Activated CD8-positive, alpha-beta memory T cell treated with anti-CD3 and anti-CD28 coated beads, Interleukin-2, amount 10 ng/mL, durations not matched to agents 7 days and 5 days (primary cell): ENCODE measurements at regions of chr15 and their contacts with region 1.

Region 1: DNA sequence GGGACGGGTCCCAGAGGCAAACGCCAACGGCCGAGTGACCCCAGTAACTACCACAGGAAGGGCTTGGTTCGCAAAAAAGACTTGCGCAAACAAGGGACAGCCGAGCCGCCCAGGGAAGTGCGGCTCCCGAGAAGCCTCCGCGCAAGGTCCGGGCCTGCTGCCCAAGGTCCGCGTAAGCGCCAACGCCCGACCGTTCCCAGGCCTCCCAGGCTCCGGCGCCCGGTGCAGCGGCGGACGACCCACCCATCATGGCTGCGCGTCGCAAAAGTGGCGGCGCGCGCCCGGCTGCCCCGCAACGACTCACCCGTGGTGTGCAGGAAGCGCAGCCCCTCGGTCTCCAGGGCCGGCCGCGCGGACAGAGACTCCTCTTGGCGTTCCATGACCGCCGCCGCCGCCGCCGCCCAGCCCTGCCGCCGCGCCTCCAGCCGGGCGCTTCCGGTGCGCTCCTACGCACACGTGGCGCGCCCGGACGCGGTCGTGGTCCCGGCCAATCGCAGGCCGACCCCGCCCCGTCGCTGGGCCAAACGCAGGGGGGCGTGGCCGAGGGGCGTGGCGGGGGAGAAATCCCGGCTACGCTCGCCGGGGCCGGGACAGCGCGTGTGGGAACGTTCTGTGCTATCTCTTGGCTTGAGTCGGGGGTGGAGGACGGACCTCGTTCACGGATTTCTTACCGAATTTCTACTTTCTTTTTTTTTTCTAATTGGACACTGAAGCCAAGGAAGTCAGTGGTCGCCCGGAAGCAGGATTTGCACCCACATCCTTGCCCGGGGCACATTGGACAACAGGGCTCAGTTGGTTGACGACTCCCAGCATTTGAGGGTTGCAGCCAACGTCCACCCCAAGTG is at the start of gene SELENOS:
- DNase-seq: peak; percentile 88
- ATAC-seq: peak; percentile 93
- H3K4me3 Mint-ChIP-seq: peak within 1 kb of the TSS; percentile 100
- H3K27ac Mint-ChIP-seq: peak within 1 kb of the TSS; percentile 99
- H3K4me1 Mint-ChIP-seq: peaks cover 30% of the 10 kb centered on the region
- H3K27me3 Mint-ChIP-seq: no peaks in the 10 kb centered on the region
- total RNA-seq, gene SELENOS: 33.1 to 49.0 TPM

Region 2: DNA sequence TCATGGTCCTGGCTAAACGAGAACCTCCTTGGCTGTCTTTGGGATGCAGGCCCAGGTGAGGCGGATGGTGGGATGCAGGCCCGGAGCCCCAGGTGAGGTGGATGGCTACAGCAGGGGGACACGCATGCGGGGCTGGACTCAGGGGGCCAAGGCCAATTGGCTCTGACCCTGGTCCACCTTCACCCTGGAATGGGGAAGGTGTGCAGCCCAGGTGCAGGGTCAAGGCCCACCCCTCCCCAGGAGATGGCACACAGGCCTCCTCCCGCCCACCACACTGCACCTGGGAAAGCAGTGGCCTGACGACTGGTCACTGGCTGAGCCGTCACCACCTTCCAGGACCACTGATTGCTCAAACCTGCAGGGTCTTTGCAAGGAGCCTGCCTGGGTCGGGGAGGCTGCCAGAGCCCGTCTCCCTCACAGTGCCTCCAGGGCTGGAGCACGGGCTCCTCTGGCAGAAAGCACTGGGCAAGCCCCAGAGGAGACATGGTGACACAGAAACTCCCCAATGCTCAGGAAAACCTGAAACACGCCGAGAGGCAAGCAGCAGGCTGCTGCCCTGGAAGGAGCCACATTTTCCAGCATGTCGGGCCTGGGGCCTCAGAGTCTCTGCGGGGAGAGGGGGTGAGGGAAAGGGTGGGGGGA is 198.5 kb before region 1 on chr15:
- CTCF ChIA-PET with region 1: no interaction called
- DNase-seq: no peak
- ATAC-seq: no peak
- H3K4me3 Mint-ChIP-seq: no peak overlapping the region
- H3K27ac Mint-ChIP-seq: no peak overlapping the region
- H3K4me1 Mint-ChIP-seq: no peaks in the 10 kb centered on the region
- H3K27me3 Mint-ChIP-seq: peaks cover 5% of the 10 kb centered on the region

Region 3: GRCh38 chr15:101288908-101289513 is 11.8 kb after region 1 on chr15:
- CTCF ChIA-PET with region 1: interaction called, 41 read pairs
- DNase-seq: no peak
- ATAC-seq: peak; percentile 52
- H3K4me3 Mint-ChIP-seq: no peak overlapping the region
- H3K27ac Mint-ChIP-seq: peak overlapping the region; percentile 70
- H3K4me1 Mint-ChIP-seq: peaks cover 61% of the 10 kb centered on the region
- H3K27me3 Mint-ChIP-seq: no peaks in the 10 kb centered on the region

Region 4: GRCh38 chr15:101294731-101295606 is 17.7 kb after region 1 on chr15 and contains the start of gene SNRPA1:
- CTCF ChIA-PET with region 1: interaction called, 41 read pairs
- DNase-seq: peak; percentile 97
- ATAC-seq: peak; percentile 89
- H3K4me3 Mint-ChIP-seq: peak within 1 kb of the TSS; percentile 95
- H3K27ac Mint-ChIP-seq: peak within 1 kb of the TSS; percentile 94
- H3K4me1 Mint-ChIP-seq: peaks cover 44% of the 10 kb centered on the region
- H3K27me3 Mint-ChIP-seq: no peaks in the 10 kb centered on the region
- total RNA-seq, gene SNRPA1: 132 to 151 TPM

Region 5: GRCh38 chr15:101381671-101382212 is 104.5 kb after region 1 on chr15:
- CTCF ChIA-PET with region 1: no interaction called
- DNase-seq: no peak
- ATAC-seq: no peak
- H3K4me3 Mint-ChIP-seq: no peak overlapping the region
- H3K27ac Mint-ChIP-seq: no peak overlapping the region
- H3K4me1 Mint-ChIP-seq: peaks cover 2% of the 10 kb centered on the region
- H3K27me3 Mint-ChIP-seq: no peaks in the 10 kb centered on the region